CD4-positive, alpha-beta T cell (primary cell): ENCODE measurements at regions of chr13 and their contacts with region 1.

Region 1: DNA sequence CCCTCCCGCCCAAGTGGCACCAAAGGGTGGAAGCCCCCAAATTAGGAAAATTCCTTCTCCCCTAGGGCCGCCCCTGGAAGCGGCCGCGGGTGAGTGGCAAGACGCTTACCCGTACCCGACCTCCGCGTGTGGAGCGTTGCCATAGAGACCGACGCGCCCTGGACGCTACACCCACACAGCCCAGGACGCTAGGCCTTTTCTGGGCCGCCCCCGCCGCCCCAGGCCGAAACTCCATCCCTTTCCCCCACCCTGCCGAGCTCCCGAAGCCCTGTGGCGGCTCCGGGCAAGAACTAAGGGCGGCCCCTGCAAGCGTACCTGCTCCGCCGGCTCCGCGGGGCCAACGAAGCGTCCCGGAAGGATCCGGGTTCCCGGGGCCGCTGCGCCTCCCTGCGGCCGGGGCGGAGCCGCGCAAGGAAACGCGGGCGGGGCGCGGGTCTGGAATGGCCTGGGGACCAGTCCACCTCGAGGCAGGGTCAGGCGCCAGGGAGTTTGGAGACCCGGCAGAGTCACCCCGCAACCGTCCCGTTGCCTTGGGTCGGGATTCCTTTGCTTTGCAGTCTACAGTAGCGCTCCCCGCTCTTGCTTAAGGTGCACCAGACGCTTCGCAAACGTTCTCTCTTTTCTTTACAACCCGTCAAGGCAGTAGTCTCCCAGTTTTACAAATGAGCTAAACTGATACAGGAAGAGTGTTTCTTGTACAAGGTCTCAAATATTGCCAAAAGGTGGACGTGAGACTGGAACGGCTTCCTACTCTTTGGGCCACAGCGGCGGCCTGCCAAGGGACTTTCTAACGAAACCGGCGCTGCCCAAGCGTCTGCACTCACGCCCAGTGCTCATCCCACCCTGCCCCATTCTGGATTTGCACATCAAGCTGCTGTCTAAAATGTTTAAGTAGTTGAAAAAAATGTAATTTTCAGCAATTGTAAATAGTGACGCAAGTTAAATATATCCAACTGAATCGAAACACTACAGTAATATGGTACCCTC is at the start of gene NEK5:
- DNase-seq: peak; percentile 8 to 72 (median 39)
- ATAC-seq: peak; percentile 82
- H3K4me3 ChIP-seq: peak within 1 kb of the TSS; percentile 65
- H3K4me3 Mint-ChIP-seq: peak within 1 kb of the TSS; percentile 76
- H3K27ac ChIP-seq: no peak within 1 kb of the TSS
- H3K27ac Mint-ChIP-seq: no peak within 1 kb of the TSS
- H3K4me1 ChIP-seq: peaks cover 19% of the 10 kb centered on the region
- H3K4me1 Mint-ChIP-seq: peaks cover 20% of the 10 kb centered on the region
- H3K27me3 ChIP-seq: peaks cover 3 to 5% of the 10 kb centered on the region in 2 experiments
- H3K27me3 Mint-ChIP-seq: no peaks in the 10 kb centered on the region
- CTCF ChIP-seq: peak; percentile 70
- total RNA-seq, gene NEK5: 0.08 TPM in 1 of 2 experiments, not detected in the other

Region 2: DNA sequence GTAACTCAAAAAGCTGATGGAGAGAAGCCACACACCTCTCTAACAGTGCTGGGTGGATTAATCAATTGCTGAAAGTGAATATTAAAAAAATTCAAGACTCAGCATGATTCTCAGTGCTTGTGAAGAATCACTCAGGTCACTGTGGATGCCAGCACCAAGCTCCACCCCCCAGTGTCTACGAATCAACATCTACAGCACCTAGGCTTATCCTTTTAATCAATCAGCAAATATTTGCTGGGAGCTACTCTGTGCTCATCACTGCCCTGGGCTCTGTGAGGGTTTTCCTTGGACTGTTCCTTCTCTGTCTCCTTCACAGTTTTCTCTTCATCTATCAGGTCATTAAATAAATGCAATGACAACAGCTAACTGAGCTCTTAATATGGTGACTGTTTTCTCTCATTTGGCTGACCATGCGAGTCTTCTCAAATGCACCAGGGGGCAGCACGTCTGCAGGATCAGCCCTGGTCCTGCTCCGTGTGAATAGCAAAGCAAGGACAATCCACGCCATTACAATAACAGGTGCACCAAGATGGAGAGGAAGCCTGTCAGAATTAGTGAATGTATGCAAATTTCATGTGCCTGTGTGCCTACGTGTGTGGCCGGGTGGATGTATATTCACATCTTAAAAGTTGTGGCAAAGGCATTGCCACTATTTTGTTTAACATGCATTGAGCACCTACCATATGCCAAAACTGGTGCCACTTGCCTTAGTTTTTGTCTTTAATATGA is 1003.3 kb before region 1 on chr13:
- CTCF ChIA-PET with region 1: no interaction called
- POLR2A ChIA-PET with region 1: no interaction called
- intact Hi-C with region 1: loop called (anchors 5 to 10 kb)
- DNase-seq: peak in 10 of 14 experiments; percentile 4 to 69 (median 20)
- ATAC-seq: peak; percentile 46
- H3K4me3 ChIP-seq: no peak overlapping the region
- H3K4me3 Mint-ChIP-seq: no peak overlapping the region
- H3K27ac ChIP-seq: no peak overlapping the region
- H3K27ac Mint-ChIP-seq: no peak overlapping the region
- H3K4me1 ChIP-seq: no peaks in the 10 kb centered on the region
- H3K4me1 Mint-ChIP-seq: peaks cover 4% of the 10 kb centered on the region
- H3K27me3 ChIP-seq: no peaks in the 10 kb centered on the region
- H3K27me3 Mint-ChIP-seq: peaks cover 15% of the 10 kb centered on the region
- CTCF ChIP-seq: peak; percentile 46

Region 3: DNA sequence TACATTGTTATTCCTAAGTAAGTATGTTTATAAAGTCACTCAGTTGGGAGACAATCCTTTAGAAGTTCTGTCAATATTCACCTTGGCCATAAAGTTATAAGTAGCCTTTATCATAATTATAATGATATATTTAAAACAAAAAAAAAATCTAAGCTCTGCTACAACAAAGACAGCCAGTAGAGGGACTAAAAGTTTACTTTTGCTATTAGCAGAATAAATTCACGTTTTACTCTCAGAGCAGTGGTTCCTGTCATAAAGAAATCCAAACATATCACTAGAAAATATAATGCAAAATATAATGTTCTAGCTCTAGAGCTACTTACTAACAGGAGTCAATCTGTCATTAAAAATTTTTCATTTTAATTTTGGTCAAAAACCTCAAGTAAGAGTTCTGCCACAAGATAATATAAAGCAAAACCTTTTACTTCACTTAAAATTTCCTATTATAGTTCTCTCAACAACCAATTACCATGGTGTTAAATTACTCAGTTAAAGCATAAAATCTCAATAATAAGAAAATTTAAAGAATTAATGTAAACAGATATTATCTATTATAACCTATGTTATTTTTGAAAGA is 693.9 kb before region 1 on chr13:
- CTCF ChIA-PET with region 1: no interaction called
- POLR2A ChIA-PET with region 1: no interaction called
- intact Hi-C with region 1: loop called in 1 of 2 experiments (anchors 10 kb)
- DNase-seq: peak in 3 of 14 experiments; percentile 47 to 58 (median 54)
- ATAC-seq: peak; percentile 56
- H3K4me3 ChIP-seq: no peak overlapping the region
- H3K4me3 Mint-ChIP-seq: no peak overlapping the region
- H3K27ac ChIP-seq: no peak overlapping the region
- H3K27ac Mint-ChIP-seq: no peak overlapping the region
- H3K4me1 ChIP-seq: no peaks in the 10 kb centered on the region
- H3K4me1 Mint-ChIP-seq: peaks cover 45% of the 10 kb centered on the region
- H3K27me3 ChIP-seq: no peaks in the 10 kb centered on the region
- H3K27me3 Mint-ChIP-seq: no peaks in the 10 kb centered on the region
- CTCF ChIP-seq: peak; percentile 67

Region 4: GRCh38 chr13:51844862-51845573 is 284.0 kb before region 1 on chr13 and contains the start of gene TMEM272:
- CTCF ChIA-PET with region 1: interaction called, 4 read pairs
- POLR2A ChIA-PET with region 1: no interaction called
- intact Hi-C with region 1: loop called (anchors 1 to 2 kb)
- DNase-seq: peak in 12 of 14 experiments; percentile 25 to 71 (median 44)
- ATAC-seq: peak; percentile 84
- H3K4me3 ChIP-seq: no peak within 1 kb of the TSS
- H3K4me3 Mint-ChIP-seq: no peak within 1 kb of the TSS
- H3K27ac ChIP-seq: no peak within 1 kb of the TSS
- H3K27ac Mint-ChIP-seq: no peak within 1 kb of the TSS
- H3K4me1 ChIP-seq: peaks cover 7% of the 10 kb centered on the region
- H3K4me1 Mint-ChIP-seq: peaks cover 7% of the 10 kb centered on the region
- H3K27me3 ChIP-seq: no peaks in the 10 kb centered on the region
- H3K27me3 Mint-ChIP-seq: peaks cover 6% of the 10 kb centered on the region
- CTCF ChIP-seq: peak; percentile 89
- total RNA-seq, gene TMEM272: 2.7 to 2.8 TPM

Region 5: DNA sequence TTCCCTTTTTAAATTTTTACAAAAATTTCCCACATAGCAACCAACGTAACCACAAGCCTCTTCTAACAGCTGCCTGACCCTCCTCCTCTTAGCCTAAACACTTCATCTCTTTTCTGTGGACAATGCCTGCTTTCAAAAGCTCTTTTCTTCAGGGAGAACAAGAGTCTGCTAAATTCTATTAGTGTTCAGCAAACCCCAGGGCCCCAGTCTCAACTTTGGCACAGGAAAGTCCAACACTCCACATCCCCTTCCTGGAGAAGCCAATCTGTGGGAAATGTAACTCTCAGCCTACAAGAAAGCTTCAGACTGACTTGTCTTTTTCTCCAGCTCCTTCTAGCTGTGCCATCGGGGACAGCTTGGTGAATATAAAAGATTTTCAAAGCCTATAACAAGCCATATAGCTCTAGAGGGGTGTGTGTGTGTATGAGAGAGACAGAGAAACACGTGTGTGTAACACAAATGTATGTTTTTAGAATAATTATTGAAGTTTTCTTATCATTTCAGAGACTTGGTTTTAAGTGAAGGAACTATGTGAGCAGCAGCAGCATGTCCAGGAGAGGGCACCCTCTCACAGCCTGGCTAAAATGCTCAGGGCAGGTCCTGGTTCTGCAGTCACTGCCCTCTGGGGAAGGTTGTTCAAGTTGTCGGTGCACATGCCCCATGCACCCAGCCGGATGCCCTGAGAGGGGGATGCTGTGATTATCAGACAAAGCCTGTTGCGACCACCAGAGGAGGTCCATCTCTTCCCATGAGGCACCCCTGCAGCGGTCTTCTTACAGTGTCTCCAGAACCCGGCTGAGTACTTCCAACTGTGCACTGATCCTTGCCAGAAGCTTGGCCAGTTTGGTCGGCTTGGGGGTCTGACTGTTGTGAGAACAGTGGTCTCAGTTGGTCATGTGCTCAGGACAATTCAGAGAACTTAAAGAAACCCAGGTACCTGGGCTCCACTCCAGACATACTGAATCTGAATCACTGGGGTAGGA is 232.8 kb before region 1 on chr13:
- CTCF ChIA-PET with region 1: interaction called, 8 read pairs
- POLR2A ChIA-PET with region 1: interaction called, 4 read pairs
- intact Hi-C with region 1: loop called in 1 of 2 experiments (anchors 1 kb)
- DNase-seq: peak; percentile 4 to 71 (median 37)
- ATAC-seq: peak; percentile 63
- H3K4me3 ChIP-seq: no peak overlapping the region
- H3K4me3 Mint-ChIP-seq: no peak overlapping the region
- H3K27ac ChIP-seq: no peak overlapping the region
- H3K27ac Mint-ChIP-seq: no peak overlapping the region
- H3K4me1 ChIP-seq: no peaks in the 10 kb centered on the region
- H3K4me1 Mint-ChIP-seq: peaks cover 5% of the 10 kb centered on the region
- H3K27me3 ChIP-seq: no peaks in the 10 kb centered on the region
- H3K27me3 Mint-ChIP-seq: no peaks in the 10 kb centered on the region
- CTCF ChIP-seq: peak; percentile 52

Region 6: GRCh38 chr13:52001120-52001731 is 127.8 kb before region 1 on chr13:
- CTCF ChIA-PET with region 1: interaction called, 4 read pairs
- POLR2A ChIA-PET with region 1: no interaction called
- intact Hi-C with region 1: loop called (anchors 1 kb)
- DNase-seq: peak in 5 of 14 experiments; percentile 5 to 61 (median 51)
- ATAC-seq: peak; percentile 81
- H3K4me3 ChIP-seq: no peak overlapping the region
- H3K4me3 Mint-ChIP-seq: no peak overlapping the region
- H3K27ac ChIP-seq: no peak overlapping the region
- H3K27ac Mint-ChIP-seq: no peak overlapping the region
- H3K4me1 ChIP-seq: no peaks in the 10 kb centered on the region
- H3K4me1 Mint-ChIP-seq: peaks cover 4% of the 10 kb centered on the region
- H3K27me3 ChIP-seq: peaks cover 0 to 4% of the 10 kb centered on the region in 2 experiments
- H3K27me3 Mint-ChIP-seq: peaks cover 8% of the 10 kb centered on the region
- CTCF ChIP-seq: peak; percentile 85